A673 (cell line): ENCODE measurements at regions of chr4 and their contacts with region 1.

Region 1: GRCh38 chr4:119041951-119042560 is 93.6 kb upstream of the MYOZ2 start:
- DNase-seq: peak; percentile 81
- H3K4me3 ChIP-seq: no peak overlapping the region
- H3K27ac ChIP-seq: no peak overlapping the region
- H3K4me1 ChIP-seq: no peaks in the 10 kb centered on the region
- H3K27me3 ChIP-seq: no peaks in the 10 kb centered on the region
- CTCF ChIP-seq: peak; percentile 70

Region 2: DNA sequence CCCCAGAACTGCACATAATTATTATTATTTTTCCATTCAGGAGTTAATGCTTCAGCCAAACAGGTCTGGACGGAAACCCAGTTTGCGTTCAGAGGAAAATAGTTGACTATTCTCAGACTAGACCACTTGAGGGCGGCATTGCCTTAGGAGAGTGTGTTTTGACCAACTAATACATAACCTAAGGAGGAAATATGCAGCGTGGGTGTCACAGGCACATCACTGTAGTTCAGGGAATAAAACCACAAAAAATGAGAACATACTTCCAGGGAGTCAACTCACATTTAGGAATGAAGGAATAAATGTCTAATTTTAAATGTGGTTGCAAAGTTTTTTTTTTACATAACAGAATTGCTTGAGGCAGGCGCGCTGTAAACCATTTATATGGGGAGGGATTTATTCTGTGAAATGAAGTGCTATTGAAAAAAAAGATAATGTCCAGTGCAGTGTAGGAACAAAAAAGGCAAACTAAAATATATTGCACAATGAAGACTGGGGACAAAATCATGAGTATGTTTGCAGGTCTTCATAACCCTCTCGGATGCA is 60.1 kb before region 1 on chr4:
- CTCF ChIA-PET with region 1: interaction called, 3 read pairs
- POLR2A ChIA-PET with region 1: no interaction called
- intact Hi-C with region 1: loop called (anchors 5 kb)
- DNase-seq: peak; percentile 74
- H3K4me3 ChIP-seq: no peak overlapping the region
- H3K27ac ChIP-seq: no peak overlapping the region
- H3K4me1 ChIP-seq: no peaks in the 10 kb centered on the region
- H3K27me3 ChIP-seq: no peaks in the 10 kb centered on the region
- CTCF ChIP-seq: peak; percentile 79

Region 3: DNA sequence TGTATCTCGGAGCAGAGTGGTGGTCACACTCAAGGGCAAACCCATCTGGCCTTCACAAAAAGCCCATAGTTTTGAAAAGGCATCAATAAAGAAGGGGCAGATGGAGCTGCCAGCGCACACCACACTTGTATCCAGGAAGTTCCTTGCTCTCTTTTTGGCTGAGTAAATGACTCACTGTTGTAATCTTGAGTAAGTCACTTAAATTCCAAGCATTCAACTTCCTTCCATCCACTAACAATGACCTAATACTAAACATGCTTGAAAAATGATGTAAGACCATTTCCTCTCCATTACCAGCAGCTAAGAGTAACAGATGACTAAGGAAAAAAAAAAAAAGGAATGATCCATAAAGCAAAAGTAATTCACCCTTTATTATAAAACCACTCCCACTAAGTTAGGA is 61.2 kb after region 1 on chr4:
- CTCF ChIA-PET with region 1: no interaction called
- POLR2A ChIA-PET with region 1: interaction called, 11 read pairs
- intact Hi-C with region 1: no loop called
- DNase-seq: peak; percentile 93
- H3K4me3 ChIP-seq: no peak overlapping the region
- H3K27ac ChIP-seq: peak overlapping the region; percentile 78
- H3K4me1 ChIP-seq: peaks cover 47% of the 10 kb centered on the region
- H3K27me3 ChIP-seq: no peaks in the 10 kb centered on the region
- CTCF ChIP-seq: no peak

Region 4: GRCh38 chr4:119212234-119212963 is 170.3 kb after region 1 on chr4 and contains the start of gene USP53:
- CTCF ChIA-PET with region 1: no interaction called
- POLR2A ChIA-PET with region 1: no interaction called
- intact Hi-C with region 1: loop called (anchors 5 kb)
- DNase-seq: peak; percentile 99
- H3K4me3 ChIP-seq: peak within 1 kb of the TSS; percentile 62
- H3K27ac ChIP-seq: peak within 1 kb of the TSS; percentile 77
- H3K4me1 ChIP-seq: peaks cover 6% of the 10 kb centered on the region
- H3K27me3 ChIP-seq: no peaks in the 10 kb centered on the region
- CTCF ChIP-seq: no peak
- total RNA-seq, gene USP53: 10.5 and 12.2 TPM in 2 replicates

Region 5: DNA sequence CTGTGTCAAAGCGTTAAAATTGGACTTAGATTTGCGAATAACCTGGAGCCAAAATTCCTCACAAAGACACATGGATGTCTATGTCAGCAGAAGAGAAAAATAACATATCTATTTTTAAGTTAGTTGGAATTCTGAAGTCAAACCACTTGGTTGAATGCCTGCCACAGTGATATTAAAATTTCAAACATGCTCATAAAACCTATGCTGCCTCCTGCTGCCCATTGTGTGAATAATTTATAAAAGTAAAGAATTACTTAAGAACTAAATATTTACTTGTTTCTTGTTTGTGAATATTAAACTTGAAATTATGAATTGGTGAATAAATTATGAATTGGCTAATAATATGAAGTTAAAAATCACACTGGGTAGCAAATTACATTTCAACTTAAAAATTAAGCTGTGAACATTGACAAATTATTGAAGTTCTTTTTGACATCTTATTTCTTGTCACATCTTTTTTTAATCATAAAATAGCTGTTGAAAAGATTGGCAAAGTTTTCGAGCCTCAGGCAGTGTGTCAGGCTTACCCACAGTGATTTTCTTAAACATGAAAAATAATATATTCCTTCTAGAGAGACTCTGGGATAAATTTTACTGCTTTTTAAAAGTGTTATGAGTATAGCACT is 244.4 kb after region 1 on chr4:
- CTCF ChIA-PET with region 1: no interaction called
- POLR2A ChIA-PET with region 1: no interaction called
- intact Hi-C with region 1: loop called (anchors 2 kb)
- DNase-seq: peak; percentile 73
- H3K4me3 ChIP-seq: no peak overlapping the region
- H3K27ac ChIP-seq: no peak overlapping the region
- H3K4me1 ChIP-seq: peaks cover 12% of the 10 kb centered on the region
- H3K27me3 ChIP-seq: no peaks in the 10 kb centered on the region
- CTCF ChIP-seq: peak; percentile 73